ENCODE measurements at regions of chr22 and their contacts with region 1.

Region 1: DNA sequence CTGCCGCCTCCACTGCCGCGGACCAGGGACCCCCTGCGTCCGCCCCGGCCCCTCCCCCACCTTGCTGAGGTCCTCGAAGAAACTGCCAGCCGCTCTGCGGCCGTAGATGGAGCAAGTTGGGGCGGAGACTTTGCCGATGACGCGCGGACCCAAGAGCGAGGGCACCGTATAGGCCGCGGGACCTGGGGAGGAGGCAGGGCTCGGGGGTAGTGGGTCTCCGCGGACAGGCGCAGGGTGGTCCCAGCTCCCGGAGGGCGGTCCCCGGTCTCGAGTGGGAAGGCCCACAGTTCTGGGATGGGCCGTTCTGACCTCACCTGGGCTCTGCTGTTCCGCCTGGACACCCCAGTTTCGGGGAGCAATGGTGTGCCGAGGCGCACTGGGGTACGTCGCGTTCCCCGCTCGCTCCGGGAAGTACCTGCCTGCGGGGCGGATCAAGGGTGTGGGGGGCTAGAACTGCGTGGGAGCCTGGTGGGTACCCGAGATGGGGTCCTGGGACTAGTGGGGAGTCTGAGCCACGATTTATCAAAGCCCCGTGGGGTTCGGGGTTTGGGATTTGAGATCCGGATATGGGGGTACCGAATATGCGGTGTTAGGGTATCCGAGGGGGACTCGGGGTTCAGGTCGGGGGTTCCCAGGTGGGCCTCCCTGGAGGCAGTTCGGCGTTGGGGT is 1.2 kb upstream of the TYMP start:
- DNase-seq: peak; percentile 88
- H3K4me3 Mint-ChIP-seq: peak overlapping the region; percentile 92
- H3K27ac Mint-ChIP-seq: peak overlapping the region; percentile 99
- H3K4me1 Mint-ChIP-seq: peaks cover 47% of the 10 kb centered on the region
- H3K27me3 Mint-ChIP-seq: no peaks in the 10 kb centered on the region

Region 2: GRCh38 chr22:50459496-50460140 is 71.4 kb before region 1 on chr22:
- CTCF ChIA-PET with region 1: no interaction called
- intact Hi-C with region 1: no loop called
- DNase-seq: no peak
- H3K4me3 Mint-ChIP-seq: no peak overlapping the region
- H3K27ac Mint-ChIP-seq: no peak overlapping the region
- H3K4me1 Mint-ChIP-seq: no peaks in the 10 kb centered on the region
- H3K27me3 Mint-ChIP-seq: no peaks in the 10 kb centered on the region

Region 3: GRCh38 chr22:50544078-50544745 is 13.2 kb after region 1 on chr22:
- CTCF ChIA-PET with region 1: interaction called, 39 read pairs
- intact Hi-C with region 1: loop called (anchors 1 kb)
- DNase-seq: peak; percentile 92
- H3K4me3 Mint-ChIP-seq: peak overlapping the region; percentile 62
- H3K27ac Mint-ChIP-seq: peak overlapping the region; percentile 72
- H3K4me1 Mint-ChIP-seq: peaks cover 60% of the 10 kb centered on the region
- H3K27me3 Mint-ChIP-seq: no peaks in the 10 kb centered on the region